BJ (cell line): ENCODE measurements at regions of chr5 and their contacts with region 1.

Region 1: DNA sequence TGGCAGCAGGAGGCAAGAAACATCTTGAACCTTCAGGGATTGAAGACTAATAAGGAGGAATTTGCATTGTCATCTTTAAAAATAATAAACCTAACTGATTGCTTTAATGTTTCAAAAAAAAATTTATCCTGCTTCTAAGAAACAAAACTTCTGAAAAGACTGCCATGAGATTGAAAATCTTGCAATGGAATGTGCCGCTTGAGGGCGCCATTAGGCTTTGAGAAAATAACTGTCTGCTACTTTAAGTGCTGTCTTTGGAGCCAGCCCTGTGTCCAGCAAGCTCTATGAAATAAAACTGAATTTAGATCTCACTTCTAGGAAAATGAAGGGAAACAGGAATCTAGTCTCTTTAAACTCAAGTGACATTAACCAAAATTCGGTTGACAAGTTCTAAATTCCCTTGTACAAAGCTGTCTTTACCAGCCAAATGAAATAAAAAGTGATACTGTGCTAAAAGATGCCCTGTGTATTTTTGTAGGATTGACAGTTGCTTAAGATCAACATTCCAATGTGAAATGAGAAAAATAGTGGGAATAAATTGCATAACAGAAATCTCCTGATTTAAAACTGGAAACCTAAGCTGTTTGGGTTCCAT is 79.4 kb downstream of the ESM1 start:
- DNase-seq: peak; percentile 31
- H3K4me3 ChIP-seq: no peak overlapping the region
- H3K27me3 ChIP-seq: no peaks in the 10 kb centered on the region
- CTCF ChIP-seq: peak; percentile 77

Region 2: DNA sequence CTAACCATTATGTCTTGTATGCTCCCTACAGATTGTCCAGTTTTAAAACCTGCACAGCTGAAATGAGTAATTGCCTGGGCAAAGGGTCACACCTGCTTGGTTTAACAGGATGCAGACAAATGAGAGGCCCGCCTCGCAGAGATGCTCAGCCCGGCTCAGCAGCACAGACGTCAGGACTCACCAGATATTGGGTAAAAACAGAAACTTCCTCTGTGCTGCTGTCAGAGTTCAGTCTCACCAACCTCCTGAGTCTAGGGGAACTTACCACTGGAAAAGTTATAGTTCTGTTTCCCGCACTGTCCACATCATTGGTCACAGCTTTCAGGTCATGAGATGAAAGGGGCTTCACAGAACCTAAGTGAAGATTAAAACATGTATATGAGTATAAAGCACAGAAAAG is 73.2 kb before region 1 on chr5:
- CTCF ChIA-PET with region 1: no interaction called
- POLR2A ChIA-PET with region 1: no interaction called
- DNase-seq: no peak
- H3K4me3 ChIP-seq: no peak overlapping the region
- H3K27me3 ChIP-seq: no peaks in the 10 kb centered on the region
- CTCF ChIP-seq: no peak

Region 3: DNA sequence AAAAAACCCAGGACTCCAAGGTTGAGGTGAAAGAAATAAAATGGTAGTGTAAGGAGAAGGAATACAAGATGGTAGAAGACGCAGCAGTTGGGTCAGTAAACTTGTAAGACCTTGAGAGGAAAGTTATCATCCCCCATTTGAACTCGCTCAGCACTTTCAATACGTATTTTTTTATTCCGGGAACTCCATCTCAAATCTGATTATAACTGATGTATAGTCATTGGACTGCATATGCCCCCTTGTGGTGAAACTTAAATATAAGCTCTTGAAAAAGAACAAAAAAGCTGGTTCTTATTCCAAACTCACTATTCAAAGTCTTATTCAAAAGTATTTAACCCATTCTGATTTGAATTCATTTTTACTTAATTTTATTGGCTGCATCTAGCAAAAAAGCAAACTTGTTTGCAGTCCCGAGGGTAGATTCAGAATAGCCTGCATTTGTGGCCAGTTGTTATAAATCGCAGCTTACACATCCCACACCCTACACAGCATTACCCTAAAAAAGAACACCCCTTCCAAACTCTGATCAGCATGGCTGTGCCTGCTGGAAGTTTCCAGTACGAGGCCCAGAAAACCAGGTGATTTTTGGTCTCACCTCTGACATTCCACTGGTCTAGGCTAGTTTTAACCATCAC is 38.6 kb before region 1 on chr5:
- CTCF ChIA-PET with region 1: interaction called, 12 read pairs
- POLR2A ChIA-PET with region 1: no interaction called
- DNase-seq: no peak
- H3K4me3 ChIP-seq: no peak overlapping the region
- H3K27me3 ChIP-seq: peaks cover 2% of the 10 kb centered on the region; the same call in 1 of the 2 replicates
- CTCF ChIP-seq: peak; percentile 55

Region 4: DNA sequence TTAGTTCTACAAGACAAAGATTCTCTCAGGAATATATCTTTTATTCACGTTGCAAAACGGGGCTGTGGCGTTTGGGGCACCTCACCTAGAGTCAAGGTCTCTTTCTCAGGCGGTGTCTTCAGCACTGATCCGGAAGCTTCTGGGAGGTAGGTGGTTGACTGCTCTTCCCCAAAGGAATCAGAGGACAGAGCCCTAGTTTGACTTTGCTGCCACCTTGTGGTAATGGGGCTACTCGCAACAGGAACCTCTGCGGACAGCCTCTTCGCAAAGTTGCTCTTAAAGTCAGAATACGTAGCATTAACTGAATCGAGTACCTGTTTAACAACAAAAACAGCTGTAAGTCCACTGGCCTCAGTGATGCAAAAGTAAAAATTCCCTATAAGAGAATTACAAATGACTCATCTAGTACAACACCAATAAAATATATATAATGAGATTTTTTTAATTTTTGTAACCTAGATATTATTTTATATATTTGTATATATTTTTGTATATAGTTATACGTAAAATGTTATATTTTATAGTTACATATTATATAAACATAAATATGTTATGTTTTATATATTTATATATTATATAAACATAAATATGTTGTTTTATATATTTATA is 240.6 kb after region 1 on chr5:
- CTCF ChIA-PET with region 1: interaction called, 96 read pairs
- POLR2A ChIA-PET with region 1: no interaction called
- DNase-seq: peak; percentile 35
- H3K4me3 ChIP-seq: no peak overlapping the region
- H3K27me3 ChIP-seq: no peaks in the 10 kb centered on the region
- CTCF ChIP-seq: peak; percentile 91

Region 5: GRCh38 chr5:55151923-55152842 is 246.1 kb after region 1 on chr5:
- CTCF ChIA-PET with region 1: interaction called, 27 read pairs
- POLR2A ChIA-PET with region 1: no interaction called
- DNase-seq: peak; percentile 52
- H3K4me3 ChIP-seq: no peak overlapping the region
- H3K27me3 ChIP-seq: no peaks in the 10 kb centered on the region
- CTCF ChIP-seq: no peak

Region 6: GRCh38 chr5:55159763-55160492 is 253.9 kb after region 1 on chr5 and contains the start of gene GPX8:
- CTCF ChIA-PET with region 1: interaction called, 59 read pairs
- POLR2A ChIA-PET with region 1: interaction called, 5 read pairs
- DNase-seq: peak; percentile 59
- H3K4me3 ChIP-seq: peak within 1 kb of the TSS; percentile 67
- H3K27me3 ChIP-seq: no peaks in the 10 kb centered on the region
- CTCF ChIP-seq: peak; percentile 57
- polyA plus RNA-seq, gene GPX8: 115 and 271 TPM in 2 replicates